ENCODE measurements at regions of chr2 and their contacts with region 1.

Region 1: DNA sequence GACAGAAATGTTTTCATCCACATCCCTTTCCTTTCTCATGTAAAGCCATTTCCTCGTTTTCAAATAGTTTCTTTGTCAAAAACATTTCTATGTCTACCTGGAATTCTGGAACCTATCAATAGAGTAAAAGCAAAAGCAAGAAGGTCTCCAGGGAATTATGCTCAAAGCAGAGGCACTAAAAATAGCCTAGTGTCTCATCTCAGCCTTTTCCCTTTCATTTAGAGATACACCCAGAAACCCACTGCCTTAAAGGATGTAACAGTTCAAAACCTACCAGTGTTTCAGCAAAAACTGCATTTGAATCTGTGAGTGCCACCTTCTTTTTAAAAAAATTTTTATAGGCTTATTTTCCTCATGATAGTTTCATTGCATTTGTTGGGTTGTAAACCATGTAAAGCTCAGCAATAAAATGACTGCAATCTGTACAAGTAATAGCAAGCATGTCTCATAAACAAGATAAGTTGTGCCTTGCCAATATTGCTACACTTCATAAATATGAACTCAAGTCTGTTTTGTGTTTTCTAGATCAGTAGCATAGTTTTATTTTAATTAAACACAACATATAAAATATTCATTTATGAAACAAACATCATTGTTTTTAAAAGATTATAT is 927.3 kb upstream of the ACVR2A start:
- DNase-seq: no peak
- H3K4me3 ChIP-seq: no peak overlapping the region
- H3K27ac ChIP-seq: no peak overlapping the region
- H3K4me1 ChIP-seq: no peaks in the 10 kb centered on the region
- H3K27me3 ChIP-seq: no peaks in the 10 kb centered on the region
- CTCF ChIP-seq: no peak

Region 2: GRCh38 chr2:146681991-146682390 is 235.5 kb before region 1 on chr2:
- CTCF ChIA-PET with region 1: no interaction called
- POLR2A ChIA-PET with region 1: no interaction called
- intact Hi-C with region 1: no loop called
- DNase-seq: no peak
- H3K4me3 ChIP-seq: no peak overlapping the region
- H3K27ac ChIP-seq: no peak overlapping the region
- H3K4me1 ChIP-seq: no peaks in the 10 kb centered on the region
- H3K27me3 ChIP-seq: no peaks in the 10 kb centered on the region
- CTCF ChIP-seq: no peak

Region 3: GRCh38 chr2:146894514-146894913 is 23.0 kb before region 1 on chr2:
- CTCF ChIA-PET with region 1: no interaction called
- POLR2A ChIA-PET with region 1: interaction called, 16 read pairs
- intact Hi-C with region 1: no loop called
- DNase-seq: no peak
- H3K4me3 ChIP-seq: no peak overlapping the region
- H3K27ac ChIP-seq: no peak overlapping the region
- H3K4me1 ChIP-seq: no peaks in the 10 kb centered on the region
- H3K27me3 ChIP-seq: no peaks in the 10 kb centered on the region
- CTCF ChIP-seq: no peak

Region 4: GRCh38 chr2:147156970-147157369 is 239.4 kb after region 1 on chr2:
- CTCF ChIA-PET with region 1: no interaction called
- POLR2A ChIA-PET with region 1: no interaction called
- intact Hi-C with region 1: no loop called
- DNase-seq: no peak
- H3K4me3 ChIP-seq: no peak overlapping the region
- H3K27ac ChIP-seq: no peak overlapping the region
- H3K4me1 ChIP-seq: no peaks in the 10 kb centered on the region
- H3K27me3 ChIP-seq: no peaks in the 10 kb centered on the region
- CTCF ChIP-seq: no peak

Region 5: GRCh38 chr2:147260241-147260640 is 342.7 kb after region 1 on chr2:
- CTCF ChIA-PET with region 1: no interaction called
- POLR2A ChIA-PET with region 1: no interaction called
- intact Hi-C with region 1: no loop called
- DNase-seq: no peak
- H3K4me3 ChIP-seq: no peak overlapping the region
- H3K27ac ChIP-seq: no peak overlapping the region
- H3K4me1 ChIP-seq: no peaks in the 10 kb centered on the region
- H3K27me3 ChIP-seq: no peaks in the 10 kb centered on the region
- CTCF ChIP-seq: no peak